Common myeloid progenitor, CD34-positive (primary cell): ENCODE measurements at regions of chrX and their contacts with region 1.

Region 1: DNA sequence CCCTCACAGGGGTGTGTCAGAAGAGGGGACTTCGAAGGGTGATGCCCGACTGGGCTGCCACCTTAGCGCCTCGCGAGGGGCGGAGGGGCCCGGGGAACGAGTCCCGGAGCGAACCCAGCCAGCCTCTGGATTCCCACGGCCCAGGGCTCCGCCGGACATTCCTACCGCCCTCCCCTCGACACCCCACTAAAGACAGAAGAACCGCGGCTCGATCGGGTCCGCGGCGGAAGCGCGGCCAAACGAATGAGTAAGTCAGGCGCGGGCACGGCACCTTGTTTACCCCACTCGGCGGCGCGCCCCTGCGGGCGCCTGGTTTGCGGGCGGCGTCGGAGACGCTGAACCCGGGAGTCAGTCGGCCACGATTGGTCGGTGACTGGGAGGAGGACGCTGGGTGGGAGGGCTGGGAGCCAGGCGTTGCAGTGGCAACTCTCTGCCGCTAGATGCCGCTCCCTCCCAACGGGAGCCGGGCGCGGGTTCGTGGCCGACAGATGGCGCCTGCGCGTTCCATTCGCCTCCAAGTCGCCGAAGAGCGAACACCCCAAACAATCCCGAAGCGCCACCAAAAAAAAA is 1.4 kb upstream of the STAG2 start:
- DNase-seq: peak; percentile 87 to 95 (median 94)
- H3K4me3 ChIP-seq: peak overlapping the region; percentile 53 to 92 (median 78)
- H3K27ac ChIP-seq: peak overlapping the region; percentile 98 to 99
- H3K4me1 ChIP-seq: peaks cover 0 to 14% (median 6%) of the 10 kb centered on the region in 4 experiments
- H3K27me3 ChIP-seq: no peaks in the 10 kb centered on the region

Region 2: DNA sequence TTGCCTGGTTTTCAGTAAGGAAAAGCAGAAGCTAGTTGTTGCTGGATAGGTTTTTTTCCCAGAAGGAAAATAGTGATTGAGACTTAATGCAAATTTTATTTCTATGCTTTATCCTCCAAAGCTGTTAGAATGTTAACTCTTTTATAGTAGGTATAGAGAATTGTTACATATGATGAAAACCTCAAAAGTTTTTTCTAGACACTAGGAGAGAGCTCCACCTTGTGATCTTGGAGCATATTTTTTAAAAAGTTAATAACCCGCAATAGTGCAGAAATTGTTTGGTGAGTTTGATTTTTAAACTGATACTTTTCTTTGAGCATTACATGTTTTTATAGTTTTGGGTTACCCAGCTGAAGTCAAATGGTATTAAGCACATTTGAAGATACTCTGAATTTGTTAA is 57.9 kb after region 1 on chrX:
- CTCF ChIA-PET with region 1: interaction called, 12 read pairs
- POLR2A ChIA-PET with region 1: interaction called, 5 read pairs
- DNase-seq: peak; percentile 14 to 48 (median 35)
- H3K4me3 ChIP-seq: no peak overlapping the region
- H3K27ac ChIP-seq: no peak overlapping the region
- H3K4me1 ChIP-seq: peaks cover 0 to 3% (median 0%) of the 10 kb centered on the region in 4 experiments
- H3K27me3 ChIP-seq: no peaks in the 10 kb centered on the region

Region 3: DNA sequence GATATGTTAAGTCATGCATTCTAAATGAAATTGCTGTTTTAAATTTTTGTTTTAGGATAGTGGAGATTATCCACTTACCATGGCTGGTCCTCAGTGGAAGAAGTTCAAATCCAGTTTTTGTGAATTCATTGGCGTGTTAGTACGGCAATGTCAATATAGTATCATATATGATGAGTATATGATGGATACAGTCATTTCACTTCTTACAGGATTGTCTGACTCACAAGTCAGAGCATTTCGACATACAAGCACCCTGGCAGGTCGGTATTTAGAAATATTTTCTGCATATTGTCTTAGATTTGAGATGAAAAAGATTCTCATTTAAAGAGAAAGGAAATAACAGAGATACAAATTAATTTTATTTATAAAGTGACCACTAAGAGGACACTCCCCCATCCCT is 85.0 kb after region 1 on chrX:
- CTCF ChIA-PET with region 1: no interaction called
- POLR2A ChIA-PET with region 1: no interaction called
- DNase-seq: no peak
- H3K4me3 ChIP-seq: no peak overlapping the region
- H3K27ac ChIP-seq: no peak overlapping the region
- H3K4me1 ChIP-seq: no peaks in the 10 kb centered on the region
- H3K27me3 ChIP-seq: peaks cover 0 to 2% (median 0%) of the 10 kb centered on the region in 5 experiments

Region 4: DNA sequence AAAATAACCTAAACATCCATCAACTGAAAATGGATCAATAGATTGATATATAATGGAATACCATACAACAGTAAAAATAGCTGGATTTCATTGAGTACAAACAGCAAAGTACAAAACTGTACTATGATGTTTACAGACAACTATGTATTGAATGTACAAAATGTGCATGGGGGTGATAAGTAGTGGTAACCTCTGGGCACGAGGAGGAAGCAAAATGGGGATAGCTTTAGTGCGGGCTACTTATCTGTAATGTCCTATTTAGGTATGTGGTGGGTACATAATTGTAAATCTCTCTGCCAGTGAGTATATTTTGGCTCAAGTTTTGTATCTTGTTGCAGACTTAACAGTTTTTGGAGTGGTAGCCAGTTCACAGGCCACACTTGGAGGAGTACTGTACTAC is 124.9 kb after region 1 on chrX:
- CTCF ChIA-PET with region 1: no interaction called
- POLR2A ChIA-PET with region 1: no interaction called
- DNase-seq: peak in 1 of 3 donors; percentile 42
- H3K4me3 ChIP-seq: no peak overlapping the region
- H3K27ac ChIP-seq: no peak overlapping the region
- H3K4me1 ChIP-seq: no peaks in the 10 kb centered on the region
- H3K27me3 ChIP-seq: no peaks in the 10 kb centered on the region